HEK293 (cell line): ENCODE measurements at regions of chr11 and their contacts with region 1.

Region 1: DNA sequence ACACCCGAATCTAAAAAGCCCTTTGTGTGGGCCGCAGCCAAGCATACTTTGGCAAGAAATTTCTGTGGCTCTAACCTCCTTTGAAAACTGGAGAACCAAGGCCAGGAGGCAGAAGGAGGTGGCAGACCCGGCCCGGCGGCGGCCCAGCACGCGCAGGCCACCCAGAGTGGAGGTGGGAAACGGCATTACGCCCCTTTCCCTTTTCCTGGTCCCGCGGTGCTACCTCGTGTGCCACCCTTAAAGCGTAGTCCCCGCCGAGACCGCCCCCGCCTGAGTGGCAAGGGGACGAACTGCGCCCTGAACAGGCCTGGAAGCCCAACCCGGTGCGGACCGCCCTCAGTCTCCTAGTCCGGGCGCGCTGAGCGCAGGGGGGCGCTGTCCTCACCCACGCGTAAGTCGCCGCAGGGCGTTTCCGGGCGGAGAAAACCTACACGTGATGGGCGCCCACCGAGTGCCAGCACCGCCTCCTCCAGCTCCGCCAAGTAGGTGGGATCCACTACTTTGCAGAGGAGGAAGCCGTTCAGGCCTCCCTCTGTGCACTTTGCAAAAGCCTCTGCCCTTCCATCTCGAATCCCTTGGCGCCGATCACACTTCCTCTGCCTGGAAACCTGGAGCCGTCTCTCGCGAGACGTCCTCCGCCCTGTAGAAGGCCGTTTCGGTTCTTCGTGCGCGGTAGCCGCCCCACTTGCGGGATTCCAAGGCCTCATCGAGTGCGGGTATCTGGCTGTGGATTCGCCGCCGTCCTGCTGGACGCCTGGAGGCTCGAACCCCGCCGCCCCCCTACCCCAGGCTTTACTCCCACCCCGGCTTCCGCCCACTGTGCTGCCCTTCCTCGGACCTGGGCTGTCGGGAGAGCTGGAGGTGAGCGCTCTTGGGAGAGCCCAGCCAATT is at the start of gene ACCS:
- H3K4me3 ChIP-seq: peak within 1 kb of the TSS; percentile 46
- H3K27ac ChIP-seq: peak within 1 kb of the TSS; percentile 72
- H3K4me1 ChIP-seq: no peaks in the 10 kb centered on the region
- CTCF ChIP-seq: peak; percentile 92

Region 2: DNA sequence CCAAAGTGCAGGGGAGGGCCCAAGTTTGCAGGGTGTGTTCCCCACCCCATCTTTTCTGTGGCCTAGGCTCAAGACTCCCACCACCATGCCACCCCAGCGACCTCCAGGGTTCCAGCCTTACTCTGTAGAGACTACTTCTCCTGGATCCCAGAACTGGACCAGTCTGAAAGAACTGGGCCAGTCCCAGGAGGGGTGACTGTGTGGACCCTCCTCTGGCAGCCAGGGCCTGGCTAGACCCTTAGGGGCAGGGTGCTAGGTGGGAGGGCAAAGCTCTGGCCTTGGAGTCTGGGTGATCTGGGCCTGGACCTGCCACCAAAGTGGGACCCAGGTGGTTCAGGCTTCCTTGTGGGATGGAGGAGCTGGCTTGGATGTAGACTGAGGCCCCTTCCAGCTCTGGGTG is 60.1 kb before region 1 on chr11:
- CTCF ChIA-PET with region 1: no interaction called
- POLR2A ChIA-PET with region 1: interaction called, 11 read pairs
- H3K4me3 ChIP-seq: no peak overlapping the region
- H3K27ac ChIP-seq: no peak overlapping the region
- H3K4me1 ChIP-seq: no peaks in the 10 kb centered on the region
- CTCF ChIP-seq: no peak